ENCODE measurements at regions of chr2 and their contacts with region 1.

Region 1: GRCh38 chr2:11357428-11357972 is 13.1 kb upstream of the ROCK2 start:
- DNase-seq: no peak
- ATAC-seq: no peak
- H3K4me3 ChIP-seq: no peak overlapping the region
- H3K4me3 Mint-ChIP-seq: no peak overlapping the region
- H3K27ac ChIP-seq: no peak overlapping the region
- H3K27ac Mint-ChIP-seq: no peak overlapping the region
- H3K4me1 ChIP-seq: no peaks in the 10 kb centered on the region
- H3K4me1 Mint-ChIP-seq: no peaks in the 10 kb centered on the region
- H3K27me3 ChIP-seq: no peaks in the 10 kb centered on the region
- H3K27me3 Mint-ChIP-seq: peaks cover 0 to 1% of the 10 kb centered on the region in 2 donors

Region 2: DNA sequence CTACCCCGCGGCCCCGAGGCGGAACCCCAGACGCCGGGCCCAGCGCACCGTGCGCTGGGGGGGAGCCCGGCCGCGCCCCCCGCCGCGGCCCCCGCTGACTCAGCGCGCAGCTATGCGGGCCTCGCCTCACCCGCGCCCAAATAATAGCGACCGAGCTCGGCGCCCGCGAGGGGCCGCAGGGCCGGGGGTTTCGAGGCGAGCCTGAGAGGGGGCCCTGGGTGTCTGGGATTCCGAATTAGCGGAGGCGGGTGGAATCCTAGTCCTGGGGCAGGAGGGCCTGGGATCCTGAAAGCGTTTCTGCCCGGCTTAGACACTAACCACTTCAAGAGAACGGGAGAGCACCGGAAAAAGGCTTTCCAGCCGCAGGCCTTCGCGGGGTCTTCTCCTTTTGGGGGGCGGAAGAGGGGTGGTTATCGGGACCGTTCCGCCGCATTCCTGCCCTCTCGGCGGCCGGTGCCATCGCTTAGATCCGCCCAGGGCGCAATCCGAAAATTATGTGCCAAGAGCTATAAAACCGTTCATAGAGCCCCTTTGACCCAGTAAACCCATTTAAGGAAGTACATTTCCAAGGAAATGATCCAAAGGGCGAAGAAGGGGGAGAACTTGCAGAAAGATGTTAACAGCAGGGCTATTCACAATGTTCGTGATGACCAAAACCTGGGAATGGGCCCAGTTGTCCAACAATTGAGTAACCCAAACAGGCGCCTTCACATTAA is 12.4 kb before region 1 on chr2:
- CTCF ChIA-PET with region 1: interaction called in 1 of 2 experiments, 10 read pairs
- POLR2A ChIA-PET with region 1: no interaction called
- DNase-seq: peak in 11 of 35 experiments; percentile 0 to 44 (median 4)
- ATAC-seq: peak; percentile 36 to 62 (median 56)
- H3K4me3 ChIP-seq: peak overlapping the region; percentile 56 to 60
- H3K4me3 Mint-ChIP-seq: peak overlapping the region; percentile 79 to 85 (median 80)
- H3K27ac ChIP-seq: peak overlapping the region; percentile 59
- H3K27ac Mint-ChIP-seq: peak overlapping the region; percentile 73 to 88
- H3K4me1 ChIP-seq: peaks cover 13 to 16% of the 10 kb centered on the region in 2 experiments
- H3K4me1 Mint-ChIP-seq: peaks cover 27 to 34% (median 34%) of the 10 kb centered on the region in 3 donors
- H3K27me3 ChIP-seq: no peaks in the 10 kb centered on the region
- H3K27me3 Mint-ChIP-seq: no peaks in the 10 kb centered on the region

Region 3: DNA sequence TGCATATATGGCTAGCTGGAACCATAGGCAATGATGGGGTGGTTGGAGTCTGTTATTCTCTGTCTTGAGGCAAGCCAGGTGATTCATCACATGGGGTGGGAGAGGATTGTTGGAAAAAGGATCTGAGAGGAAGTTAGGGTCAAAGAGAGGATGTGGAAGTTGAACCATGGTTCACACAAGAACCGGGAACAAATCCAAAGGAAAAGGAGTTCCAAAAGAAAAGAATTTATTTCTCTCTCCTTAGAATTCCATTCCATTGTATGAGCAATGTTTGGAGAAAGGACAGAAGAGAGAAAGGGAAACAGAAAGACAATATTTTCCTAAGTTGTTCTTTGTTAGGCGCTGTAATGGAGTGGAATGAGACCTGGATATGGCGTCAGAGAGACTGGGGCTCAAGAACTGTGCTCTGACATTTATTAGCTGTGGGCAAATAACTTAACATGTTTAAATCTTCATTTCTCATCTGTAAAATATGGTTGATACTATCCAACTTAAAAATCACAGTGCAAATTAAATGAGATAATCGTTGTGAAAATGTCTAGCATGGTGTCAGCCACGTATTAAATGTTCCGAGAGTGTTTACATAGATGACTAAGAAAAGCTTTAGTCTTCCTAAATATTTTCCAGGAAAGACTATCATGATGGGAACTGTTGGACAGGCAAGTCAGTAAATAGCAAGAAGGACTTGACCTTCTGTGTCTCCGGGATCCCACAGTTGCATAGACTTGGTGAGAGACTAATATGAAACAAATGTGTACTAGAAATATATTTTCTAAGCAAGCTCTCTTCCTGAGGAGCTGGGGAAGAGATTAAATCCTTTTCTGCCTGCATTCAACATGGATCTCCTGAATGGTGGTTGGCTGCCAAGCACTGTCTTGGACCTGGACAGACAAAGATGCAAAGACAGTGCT is 1430.6 kb after region 1 on chr2:
- CTCF ChIA-PET with region 1: no interaction called
- POLR2A ChIA-PET with region 1: no interaction called
- DNase-seq: no peak
- ATAC-seq: no peak
- H3K4me3 ChIP-seq: no peak overlapping the region
- H3K4me3 Mint-ChIP-seq: no peak overlapping the region
- H3K27ac ChIP-seq: no peak overlapping the region
- H3K27ac Mint-ChIP-seq: no peak overlapping the region
- H3K4me1 ChIP-seq: no peaks in the 10 kb centered on the region
- H3K4me1 Mint-ChIP-seq: no peaks in the 10 kb centered on the region
- H3K27me3 ChIP-seq: no peaks in the 10 kb centered on the region
- H3K27me3 Mint-ChIP-seq: peaks cover 2 to 4% of the 10 kb centered on the region in 2 donors